ENCODE measurements at regions of chr19 and their contacts with region 1.

Region 1: GRCh38 chr19:38647368-38647965 is at the start of gene ACTN4:
- DNase-seq: peak; percentile 100
- H3K4me3 ChIP-seq: peak within 1 kb of the TSS; percentile 92 to 100 (median 98)
- H3K27ac ChIP-seq: peak within 1 kb of the TSS; percentile 99 to 100 (median 99)
- H3K4me1 ChIP-seq: peaks cover 22 to 64% (median 43%) of the 10 kb centered on the region in 4 donors
- H3K27me3 ChIP-seq: no peaks in the 10 kb centered on the region
- CTCF ChIP-seq: no peak
- EP300 ChIP-seq: no peak
- POLR2A ChIP-seq: peak; percentile 99
- total RNA-seq, gene ACTN4: 458 to 1,080 (median 723) TPM

Region 2: DNA sequence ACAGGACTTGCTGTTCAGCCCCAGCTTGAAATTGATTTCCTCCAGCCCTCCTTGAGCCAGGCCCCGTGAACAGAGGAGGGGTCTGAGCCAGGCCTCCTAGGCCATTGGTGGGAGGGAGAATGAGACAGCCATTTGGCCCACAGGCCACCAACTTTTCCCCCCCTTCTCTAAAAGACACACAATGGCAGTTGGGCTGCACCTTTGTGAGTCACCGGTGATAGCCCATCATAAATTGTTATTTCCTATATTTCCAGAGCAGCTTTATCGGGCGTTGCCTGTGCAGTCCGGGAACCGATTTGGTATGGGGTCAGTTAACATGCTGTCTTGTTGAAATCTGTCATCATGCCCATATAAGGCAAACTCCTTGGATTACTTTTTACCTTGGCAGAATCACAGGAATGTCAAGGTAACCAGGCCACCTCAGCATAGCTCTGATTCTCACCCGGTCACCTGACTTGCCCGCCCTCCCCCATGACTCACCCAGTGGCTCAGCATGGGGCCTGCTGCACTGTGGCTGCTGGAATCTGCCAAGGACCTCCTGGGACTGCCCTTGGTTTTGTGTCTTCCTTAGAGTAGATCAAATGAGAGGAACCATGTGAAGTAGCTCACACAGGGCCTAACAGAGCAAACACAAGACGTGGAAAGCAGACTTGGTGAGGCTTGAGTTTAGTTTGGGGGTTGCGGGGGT is 36.1 kb after region 1 on chr19:
- in situ Hi-C with region 1: no loop called
- intact Hi-C with region 1: no loop called
- DNase-seq: peak; percentile 89
- H3K4me3 ChIP-seq: no peak overlapping the region
- H3K27ac ChIP-seq: peak overlapping the region; percentile 87 to 94 (median 92)
- H3K4me1 ChIP-seq: peaks cover 57 to 97% (median 89%) of the 10 kb centered on the region in 4 donors
- H3K27me3 ChIP-seq: no peaks in the 10 kb centered on the region
- CTCF ChIP-seq: no peak
- EP300 ChIP-seq: peak; percentile 98
- POLR2A ChIP-seq: peak; percentile 53

Region 3: DNA sequence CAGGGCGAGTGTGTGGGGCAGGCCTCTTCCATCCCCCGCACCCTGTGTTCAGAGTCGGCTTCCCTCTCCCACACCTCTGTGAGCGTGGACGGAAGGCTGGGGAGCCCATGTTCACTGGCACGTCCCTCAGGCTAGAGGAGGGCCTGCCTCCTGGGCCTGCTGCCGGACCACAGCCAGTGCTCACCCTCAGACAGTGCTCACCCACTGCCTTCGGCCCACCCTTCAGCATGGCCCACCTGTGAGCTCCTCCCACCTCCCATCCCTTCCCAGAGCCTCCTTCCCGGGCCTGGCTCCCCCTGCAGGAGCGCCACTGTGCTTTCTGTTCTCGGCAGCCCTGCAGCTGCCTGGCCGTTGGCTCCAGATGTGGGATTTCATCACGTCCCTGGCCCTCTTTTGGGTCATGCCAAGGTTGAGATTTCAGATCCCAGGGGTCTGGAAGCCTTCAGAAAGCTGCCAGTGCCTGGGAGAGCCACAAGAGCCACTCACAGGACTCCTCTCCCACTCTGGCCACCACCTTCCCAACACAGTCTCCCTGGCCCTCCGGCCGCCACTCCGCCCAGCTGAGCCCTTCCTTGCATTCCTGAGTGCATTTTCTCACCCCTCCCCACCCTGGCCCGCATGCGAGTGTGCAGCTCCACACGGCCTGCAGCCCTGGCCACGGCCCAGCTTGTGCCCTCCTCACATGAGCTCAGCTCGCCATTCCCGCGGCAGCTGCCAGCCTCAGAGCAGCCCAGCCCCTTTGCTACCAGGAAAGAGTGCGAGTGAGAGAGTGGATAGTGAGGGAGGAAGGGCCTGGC is 71.5 kb after region 1 on chr19:
- in situ Hi-C with region 1: no loop called
- intact Hi-C with region 1: loop called (anchors 10 kb)
- DNase-seq: no peak
- H3K4me3 ChIP-seq: no peak overlapping the region
- H3K27ac ChIP-seq: peak overlapping the region; percentile 52 to 80 (median 72)
- H3K4me1 ChIP-seq: peaks cover 0 to 5% (median 0%) of the 10 kb centered on the region in 4 donors
- H3K27me3 ChIP-seq: no peaks in the 10 kb centered on the region
- CTCF ChIP-seq: peak in 2 of 5 experiments; percentile 7 to 20
- EP300 ChIP-seq: no peak
- POLR2A ChIP-seq: no peak

Region 4: GRCh38 chr19:38739440-38740256 is 92.2 kb after region 1 on chr19:
- in situ Hi-C with region 1: no loop called
- intact Hi-C with region 1: no loop called
- DNase-seq: no peak
- H3K4me3 ChIP-seq: no peak overlapping the region
- H3K27ac ChIP-seq: no peak overlapping the region
- H3K4me1 ChIP-seq: peaks cover 0 to 21% (median 18%) of the 10 kb centered on the region in 4 donors
- H3K27me3 ChIP-seq: no peaks in the 10 kb centered on the region
- CTCF ChIP-seq: no peak
- EP300 ChIP-seq: no peak
- POLR2A ChIP-seq: no peak

Measured in transverse colon (tissue), 4 donors.